Activated CD4-positive, alpha-beta T cell treated with anti-CD3 and anti-CD28 coated beads, Interleukin-2, amount 10 ng/mL, durations not matched to agents 7 days and 5 days (primary cell): ENCODE measurements at regions of chr2 and their contacts with region 1.

Region 1: DNA sequence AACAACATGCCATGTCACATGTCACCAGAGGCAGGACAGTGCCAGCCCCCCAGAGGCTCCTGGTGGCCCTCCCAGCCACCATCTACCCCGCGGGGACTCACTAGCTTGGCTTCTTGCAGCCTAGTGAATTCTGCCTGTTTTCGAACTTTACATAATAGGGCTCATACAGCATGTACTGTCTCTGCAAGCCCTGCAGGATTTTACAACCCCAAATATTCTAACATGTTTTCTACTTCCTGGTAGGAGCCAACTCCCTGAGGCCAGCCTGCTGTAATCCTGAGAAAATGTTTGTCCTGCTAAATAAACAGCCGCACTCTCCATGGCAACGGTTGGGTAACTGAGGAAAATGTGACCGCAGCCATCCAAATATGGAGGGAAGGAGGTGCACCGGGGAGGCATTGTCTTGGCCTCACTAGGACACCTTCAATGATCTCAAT is 2.7 kb downstream of the PER2 start:
- DNase-seq: no peak
- H3K4me3 Mint-ChIP-seq: no peak overlapping the region
- H3K27ac Mint-ChIP-seq: no peak overlapping the region
- H3K4me1 Mint-ChIP-seq: peaks cover 29% of the 10 kb centered on the region
- H3K27me3 Mint-ChIP-seq: no peaks in the 10 kb centered on the region

Region 2: GRCh38 chr2:238274152-238274865 is 11.4 kb before region 1 on chr2:
- CTCF ChIA-PET with region 1: interaction called, 15 read pairs
- POLR2A ChIA-PET with region 1: no interaction called
- DNase-seq: no peak
- H3K4me3 Mint-ChIP-seq: no peak overlapping the region
- H3K27ac Mint-ChIP-seq: no peak overlapping the region
- H3K4me1 Mint-ChIP-seq: no peaks in the 10 kb centered on the region
- H3K27me3 Mint-ChIP-seq: no peaks in the 10 kb centered on the region